Heart right ventricle (tissue), 16 donors: ENCODE measurements at regions of chr1 and their contacts with region 1.

Region 1: GRCh38 chr1:89622895-89623294 is 10.0 kb upstream of the LRRC8C start:
- DNase-seq: no peak
- ATAC-seq: peak in 1 of 8 donors; percentile 47
- H3K4me3 ChIP-seq: no peak overlapping the region
- H3K27ac ChIP-seq: no peak overlapping the region
- H3K4me1 ChIP-seq: peaks cover 0 to 18% (median 3%) of the 10 kb centered on the region in 9 donors
- H3K27me3 ChIP-seq: no peaks in the 10 kb centered on the region
- CTCF ChIP-seq: peak in 3 of 9 donors; percentile 17 to 31 (median 29)

Region 2: GRCh38 chr1:89611721-89612120 is 11.2 kb before region 1 on chr1:
- intact Hi-C with region 1: no loop called
- DNase-seq: no peak
- ATAC-seq: no peak
- H3K4me3 ChIP-seq: no peak overlapping the region
- H3K27ac ChIP-seq: peak overlapping the region in 1 of 10 donors; percentile 73
- H3K4me1 ChIP-seq: peaks cover 19 to 72% (median 50%) of the 10 kb centered on the region in 9 donors
- H3K27me3 ChIP-seq: no peaks in the 10 kb centered on the region
- CTCF ChIP-seq: no peak

Region 3: GRCh38 chr1:89706700-89707012 is 83.8 kb after region 1 on chr1:
- intact Hi-C with region 1: loop called in 1 of 10 experiments (anchors 10 kb)
- DNase-seq: no peak
- ATAC-seq: peak in 1 of 8 donors; percentile 31
- H3K4me3 ChIP-seq: no peak overlapping the region
- H3K27ac ChIP-seq: peak overlapping the region in 1 of 10 donors; percentile 42
- H3K4me1 ChIP-seq: peaks cover 5 to 46% (median 13%) of the 10 kb centered on the region in 9 donors
- H3K27me3 ChIP-seq: no peaks in the 10 kb centered on the region
- CTCF ChIP-seq: no peak